GM10248 (cell line): ENCODE measurements at regions of chr3 and their contacts with region 1.

Region 1: DNA sequence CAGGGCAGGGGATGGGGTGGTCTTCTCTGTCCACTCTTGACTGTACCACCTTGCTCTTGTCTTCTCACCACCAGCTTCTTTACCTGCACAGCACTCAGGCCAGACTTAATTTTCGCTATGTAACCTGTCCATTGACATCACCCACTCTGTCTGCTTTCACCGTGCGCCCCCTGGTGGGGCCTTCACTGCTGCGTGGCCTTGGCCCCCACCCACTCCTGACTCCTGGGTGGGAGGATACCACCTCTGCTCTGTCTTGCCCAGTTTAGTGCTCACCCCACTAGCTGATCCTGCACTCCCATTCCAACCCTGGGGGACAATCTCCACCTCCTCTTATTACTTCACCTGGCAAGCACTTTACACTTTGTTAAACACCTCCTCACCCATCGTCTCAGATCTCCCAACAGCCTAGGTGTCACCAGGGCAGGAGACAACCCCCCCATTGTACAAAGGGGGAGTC is 17.7 kb downstream of the PTH1R start:
- DNase-seq: peak; percentile 82
- CTCF ChIP-seq: peak; percentile 83

Region 2: GRCh38 chr3:46705022-46705530 is 190.2 kb before region 1 on chr3:
- CTCF ChIA-PET with region 1: interaction called, 37 read pairs
- POLR2A ChIA-PET with region 1: no interaction called
- DNase-seq: peak; percentile 85
- CTCF ChIP-seq: peak; percentile 98

Region 3: DNA sequence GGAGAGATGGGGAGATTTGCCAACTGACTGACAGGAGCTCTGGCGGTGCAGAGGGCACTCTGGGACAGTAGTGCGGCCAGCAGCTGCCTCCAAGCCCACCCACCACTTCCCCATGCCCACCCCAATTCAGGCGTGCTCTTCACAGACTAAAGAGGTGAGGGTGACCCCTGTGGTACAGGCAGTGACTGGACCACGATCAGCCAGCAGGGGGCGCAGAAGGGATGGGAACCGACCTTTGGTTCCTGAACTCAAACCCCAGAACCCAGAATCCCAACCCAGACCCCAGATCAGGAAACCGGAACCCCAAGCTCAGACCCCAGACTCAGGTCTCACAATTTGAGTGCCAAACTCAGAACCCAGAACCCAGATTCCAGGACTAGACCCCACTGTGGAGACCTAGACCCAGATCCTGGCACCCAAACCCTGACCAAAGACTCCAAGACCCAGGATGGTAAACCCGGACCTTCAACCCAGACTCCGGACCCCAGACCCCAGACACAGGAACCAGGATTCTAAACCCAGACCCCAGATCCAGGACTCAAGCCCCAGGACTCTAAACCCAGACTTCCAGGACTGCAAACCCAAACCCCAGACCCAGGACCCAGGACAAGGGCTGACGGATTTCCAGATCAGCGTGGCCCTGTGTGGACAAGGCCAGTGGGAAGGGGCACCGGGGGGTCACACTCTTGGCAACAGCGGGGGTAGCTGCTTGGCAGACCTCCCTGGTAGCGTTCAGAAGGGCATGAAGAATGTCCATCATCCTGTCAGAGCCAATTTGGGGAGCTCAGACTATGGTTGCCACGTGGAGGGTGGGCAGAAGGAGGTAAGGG is 28.3 kb before region 1 on chr3:
- CTCF ChIA-PET with region 1: interaction called, 19 read pairs
- POLR2A ChIA-PET with region 1: no interaction called
- DNase-seq: peak; percentile 87
- CTCF ChIP-seq: peak; percentile 96

Region 4: DNA sequence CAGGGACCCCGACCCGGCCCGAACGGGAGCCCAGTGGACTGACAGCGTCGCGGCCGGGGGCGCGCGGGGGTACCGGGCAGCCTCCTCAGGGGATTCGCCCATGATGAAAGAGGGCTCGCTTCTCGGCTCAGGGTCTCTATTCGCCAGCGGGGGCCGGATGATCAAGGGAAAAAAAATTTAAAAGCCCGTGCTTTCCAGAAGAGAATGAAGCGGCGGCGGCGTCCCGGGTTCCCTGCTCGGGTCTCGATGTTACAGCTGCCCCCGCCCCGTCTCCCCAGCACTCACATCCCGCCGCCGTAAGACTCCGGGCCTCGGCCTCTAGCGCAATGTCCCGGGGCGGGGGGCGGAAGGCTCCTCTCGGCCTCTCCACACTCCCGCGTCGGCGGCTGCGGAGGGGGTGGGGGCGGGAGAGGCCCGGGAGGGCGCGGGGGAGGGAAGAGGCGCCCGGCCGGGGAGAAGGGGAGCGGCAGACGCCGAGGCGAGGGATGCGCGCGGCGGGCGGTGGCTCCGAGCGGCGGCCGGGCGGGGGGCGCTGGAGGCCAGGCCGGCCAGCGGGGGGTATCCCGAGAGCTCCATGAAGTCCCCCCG is 13.3 kb before region 1 on chr3:
- CTCF ChIA-PET with region 1: interaction called, 19 read pairs
- POLR2A ChIA-PET with region 1: no interaction called
- DNase-seq: no peak
- CTCF ChIP-seq: no peak